GM18951 (cell line): ENCODE measurements at regions of chr3 and their contacts with region 1.

Region 1: GRCh38 chr3:46089237-46090011 is 62.1 kb upstream of the XCR1 start:
- POLR2A ChIP-seq: no peak

Region 2: GRCh38 chr3:45631486-45631885 is 457.9 kb before region 1 on chr3:
- in situ Hi-C with region 1: no loop called
- POLR2A ChIP-seq: no peak

Region 3: DNA sequence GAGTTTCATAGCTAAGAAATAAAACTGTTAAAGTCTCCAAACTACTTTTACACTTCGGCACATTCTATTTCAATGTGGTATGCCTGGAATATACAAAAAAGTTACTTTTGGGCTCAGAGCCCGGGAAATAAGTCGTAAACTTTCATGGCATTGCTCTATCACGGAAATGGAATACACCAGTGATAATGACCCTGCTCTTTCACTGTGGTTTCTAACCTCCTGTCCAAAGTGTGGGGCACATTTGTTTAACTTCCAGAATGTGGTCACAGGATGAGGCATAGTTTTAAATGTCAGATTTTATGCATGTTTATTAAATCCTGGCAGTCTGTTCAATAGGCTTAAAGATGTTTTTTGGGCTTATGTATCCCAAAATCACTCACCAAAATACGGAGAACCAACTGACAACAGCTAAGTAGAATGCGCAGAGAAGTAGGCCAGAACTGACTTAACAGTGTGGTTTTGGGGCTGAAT is 141.1 kb before region 1 on chr3:
- in situ Hi-C with region 1: loop called (anchors 5 kb)
- POLR2A ChIP-seq: no peak

Region 4: GRCh38 chr3:46143951-46144473 is 54.6 kb after region 1 on chr3:
- in situ Hi-C with region 1: no loop called
- POLR2A ChIP-seq: no peak

Region 5: DNA sequence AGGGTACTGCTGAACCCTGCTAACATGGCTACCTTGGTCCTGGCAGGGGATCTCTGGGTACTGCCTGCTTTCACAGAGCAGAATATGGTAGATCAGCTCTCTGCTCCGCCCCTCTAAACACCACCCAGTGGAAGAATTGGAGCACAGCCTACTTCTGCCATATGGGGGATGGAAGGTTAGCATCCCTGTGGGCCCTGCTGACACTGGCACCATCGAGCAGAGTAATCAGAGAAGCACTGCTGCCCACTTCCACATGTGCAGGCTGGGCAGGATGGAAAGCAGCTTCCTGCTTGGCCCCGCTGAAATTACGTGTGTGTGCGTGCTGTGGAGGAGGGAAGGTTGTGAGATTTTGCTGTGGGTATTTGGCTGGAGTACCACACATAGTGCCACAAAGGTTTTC is 93.9 kb after region 1 on chr3:
- in situ Hi-C with region 1: no loop called
- POLR2A ChIP-seq: no peak

Region 6: DNA sequence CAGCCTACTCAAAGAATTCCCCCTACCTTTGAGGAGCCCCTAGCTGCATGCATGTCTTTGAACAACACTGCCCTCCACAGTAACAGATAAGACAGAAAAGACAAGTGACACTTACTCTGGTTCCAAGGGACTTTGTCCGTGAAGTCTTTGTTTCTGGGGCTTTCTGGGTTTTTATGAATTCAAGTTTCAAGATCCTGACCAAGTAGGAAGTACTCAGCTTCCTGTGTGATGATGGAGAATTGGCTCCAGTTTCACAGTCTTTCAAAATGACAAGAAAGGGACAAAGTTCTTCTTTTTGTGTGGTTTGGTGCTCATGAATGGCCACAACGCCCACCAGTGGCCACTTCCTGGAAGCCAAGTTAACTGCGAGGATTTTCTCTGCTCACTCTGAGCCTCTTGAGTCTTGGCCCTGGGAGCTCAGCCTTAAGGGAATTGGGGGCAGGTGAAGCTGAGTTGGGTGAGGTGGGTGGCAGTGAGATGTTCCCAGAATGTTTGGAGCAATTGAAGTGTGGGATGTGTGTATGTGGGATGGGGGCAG is 118.8 kb after region 1 on chr3 and contains the start of gene CCR1:
- in situ Hi-C with region 1: loop called (anchors 5 kb)
- POLR2A ChIP-seq: no peak

Region 7: DNA sequence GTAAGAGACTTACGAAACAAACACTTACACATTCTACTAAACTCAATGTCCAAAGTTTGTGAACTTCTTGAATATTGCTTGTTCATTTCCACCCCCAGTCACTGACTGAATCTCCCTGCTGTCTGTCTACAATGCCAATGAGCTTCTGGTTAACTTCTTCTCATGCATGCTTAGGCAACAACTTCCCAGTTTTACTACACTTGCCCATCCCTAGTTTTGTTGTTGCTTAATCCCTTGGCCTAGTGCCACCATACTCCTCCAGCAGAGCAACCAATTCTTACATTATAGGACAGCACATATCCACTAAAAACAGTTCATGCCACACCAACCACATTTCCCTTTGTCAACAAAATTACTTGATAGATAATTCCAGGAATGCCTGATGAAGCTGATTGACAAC is 223.6 kb after region 1 on chr3:
- in situ Hi-C with region 1: no loop called
- POLR2A ChIP-seq: no peak

Region 8: GRCh38 chr3:46349485-46350261 is 260.2 kb after region 1 on chr3:
- in situ Hi-C with region 1: loop called (anchors 5 kb)
- POLR2A ChIP-seq: no peak

Region 9: DNA sequence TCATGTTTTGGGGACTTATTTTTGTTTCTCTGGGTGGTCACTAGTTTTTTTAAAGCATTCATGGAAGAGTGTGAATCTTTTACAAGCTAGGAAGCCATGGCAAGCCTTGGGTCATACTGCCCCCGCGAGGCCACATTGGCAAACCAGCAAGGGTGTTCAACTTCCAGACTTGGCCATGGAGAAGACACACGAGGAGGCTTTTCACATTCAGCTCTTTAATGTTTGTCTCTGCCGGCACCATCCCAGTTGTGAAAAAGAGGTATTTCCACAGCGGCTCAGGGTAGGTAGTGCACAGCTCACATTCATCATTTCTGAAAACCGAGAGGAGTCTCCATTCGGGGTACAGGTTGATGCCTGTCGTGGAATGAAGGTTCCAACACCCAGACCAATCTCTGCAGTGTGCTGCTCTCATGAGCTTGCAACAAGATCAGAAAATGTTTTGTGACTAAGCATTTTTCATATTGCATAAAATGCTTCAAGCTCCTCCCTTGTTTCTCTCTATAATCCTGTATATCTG is 289.1 kb after region 1 on chr3:
- in situ Hi-C with region 1: loop called (anchors 10 kb)
- POLR2A ChIP-seq: no peak